ENCODE measurements at regions of chr14 and their contacts with region 1.

Region 1: DNA sequence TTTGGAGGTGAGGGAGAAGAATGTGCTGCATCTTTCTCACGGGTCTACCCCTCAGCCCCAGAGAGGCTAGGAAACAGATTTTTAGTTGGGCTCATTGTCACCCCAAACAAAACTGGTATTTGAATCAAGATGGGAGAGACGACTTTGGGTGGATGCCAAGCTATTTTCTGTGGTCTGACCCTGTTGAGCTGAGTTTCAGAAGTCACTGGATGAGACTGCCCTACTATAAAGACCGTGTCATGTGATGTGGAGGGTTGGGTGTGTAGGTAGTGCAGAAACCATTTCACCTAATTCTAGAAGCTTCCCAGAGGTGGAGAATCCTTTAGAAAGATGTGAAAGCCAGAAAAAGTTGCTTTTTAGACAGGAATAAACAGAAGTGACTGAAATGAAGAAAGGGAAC is 60.2 kb downstream of the IFT43 start:
- DNase-seq: no peak
- H3K4me3 ChIP-seq: no peak overlapping the region
- H3K27ac ChIP-seq: no peak overlapping the region
- H3K4me1 ChIP-seq: no peaks in the 10 kb centered on the region
- H3K27me3 ChIP-seq: no peaks in the 10 kb centered on the region
- CTCF ChIP-seq: no peak

Region 2: DNA sequence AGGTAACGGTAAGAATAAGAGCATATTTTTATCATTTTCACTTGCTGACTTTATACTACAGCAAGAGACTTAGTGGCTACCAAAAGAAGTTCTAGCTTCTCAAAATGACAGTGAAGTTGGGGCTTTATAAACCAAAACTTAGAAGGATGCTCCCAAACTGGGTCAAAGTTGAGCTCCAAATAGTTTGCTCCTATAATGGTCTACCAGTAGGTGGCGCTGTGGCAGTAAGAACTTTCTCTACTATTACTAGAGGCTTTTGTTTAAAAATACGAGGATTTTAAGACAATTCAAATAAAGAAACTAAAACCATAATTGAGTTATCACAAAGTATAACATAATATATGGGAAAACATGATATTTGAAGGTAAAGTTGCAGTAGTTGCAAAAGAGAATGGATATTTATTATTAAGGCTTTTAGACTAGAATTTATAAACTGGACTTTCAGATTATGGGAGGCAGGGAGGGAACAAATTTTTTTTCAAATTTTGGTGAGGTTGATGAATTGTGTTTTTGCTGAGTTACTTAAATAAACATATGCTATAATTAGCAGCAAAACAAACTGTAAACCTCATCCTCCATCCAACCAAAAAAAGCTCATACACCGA is 139.0 kb before region 1 on chr14:
- intact Hi-C with region 1: loop called (anchors 10 kb)
- DNase-seq: peak in 1 of 2 donors; percentile 67
- H3K4me3 ChIP-seq: no peak overlapping the region
- H3K27ac ChIP-seq: no peak overlapping the region
- H3K4me1 ChIP-seq: no peaks in the 10 kb centered on the region
- H3K27me3 ChIP-seq: no peaks in the 10 kb centered on the region
- CTCF ChIP-seq: peak; percentile 81 to 87